K562 (cell line): ENCODE measurements at regions of chr18 and their contacts with region 1.

Region 1: GRCh38 chr18:596288-596881 is 403 bp upstream of the CLUL1 start:
- DNase-seq: peak; percentile 85 to 90 (median 88)
- ATAC-seq: peak; percentile 92
- H3K4me3 ChIP-seq: peak overlapping the region; percentile 25
- H3K27ac ChIP-seq: no peak overlapping the region
- H3K4me1 ChIP-seq: peaks cover 7 to 11% of the 10 kb centered on the region in 2 experiments
- H3K27me3 ChIP-seq: peaks cover 3 to 4% of the 10 kb centered on the region in 2 experiments; a peak in 3 of 5 replicates
- CTCF ChIP-seq: no peak
- EP300 ChIP-seq: no peak
- POLR2A ChIP-seq: peak; percentile 54; the same call in 1 of the 2 replicates
- RAD21 ChIP-seq: no peak

Region 2: GRCh38 chr18:499551-500408 is 96.6 kb before region 1 on chr18:
- CTCF ChIA-PET with region 1: no interaction called
- POLR2A ChIA-PET with region 1: no interaction called
- in situ Hi-C with region 1: no loop called
- intact Hi-C with region 1: loop called (anchors 5 kb)
- DNase-seq: peak in 1 of 4 experiments; percentile 14
- ATAC-seq: no peak
- H3K4me3 ChIP-seq: no peak overlapping the region
- H3K27ac ChIP-seq: no peak overlapping the region
- H3K4me1 ChIP-seq: peaks cover 0 to 18% of the 10 kb centered on the region in 2 experiments; a peak in 2 of 5 replicates
- H3K27me3 ChIP-seq: peaks cover 31 to 37% of the 10 kb centered on the region in 2 experiments
- CTCF ChIP-seq: no peak
- EP300 ChIP-seq: no peak
- POLR2A ChIP-seq: no peak
- RAD21 ChIP-seq: no peak

Region 3: DNA sequence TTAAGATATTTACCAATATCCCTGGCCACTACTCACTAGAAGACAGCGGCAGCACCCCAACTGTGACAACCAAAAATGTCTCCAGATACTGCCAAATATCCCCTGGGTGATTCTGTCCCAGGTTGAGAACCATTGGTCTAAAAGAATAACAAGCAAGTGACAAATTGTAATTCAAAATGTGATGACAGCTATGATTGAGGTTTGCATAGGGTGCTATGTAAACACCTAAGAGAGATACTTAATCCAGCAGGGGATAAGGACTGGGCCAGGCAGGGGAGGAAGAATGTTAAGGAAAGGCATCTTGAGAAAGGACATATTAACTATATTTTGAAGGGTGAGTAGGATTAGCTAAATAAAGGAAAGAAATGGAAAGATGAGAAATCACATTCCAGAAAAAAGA is 154.1 kb after region 1 on chr18:
- CTCF ChIA-PET with region 1: no interaction called
- POLR2A ChIA-PET with region 1: no interaction called
- in situ Hi-C with region 1: no loop called
- intact Hi-C with region 1: no loop called
- DNase-seq: no peak
- ATAC-seq: 0 out of 3 replicates have a peak, but pooled peaks have one; percentile 24
- H3K4me3 ChIP-seq: no peak overlapping the region
- H3K27ac ChIP-seq: no peak overlapping the region
- H3K4me1 ChIP-seq: no peaks in the 10 kb centered on the region
- H3K27me3 ChIP-seq: no peaks in the 10 kb centered on the region
- CTCF ChIP-seq: no peak
- EP300 ChIP-seq: no peak
- POLR2A ChIP-seq: no peak
- RAD21 ChIP-seq: no peak